Naive thymus-derived CD4-positive, alpha-beta T cell (primary cell): ENCODE measurements at regions of chr17 and their contacts with region 1.

Region 1: GRCh38 chr17:77287432-77288071 is 146.8 kb downstream of the SEC14L1 start:
- DNase-seq: no peak
- ATAC-seq: no peak
- H3K4me3 ChIP-seq: no peak overlapping the region
- H3K4me3 Mint-ChIP-seq: no peak overlapping the region
- H3K27ac ChIP-seq: no peak overlapping the region
- H3K27ac Mint-ChIP-seq: no peak overlapping the region
- H3K4me1 ChIP-seq: no peaks in the 10 kb centered on the region
- H3K4me1 Mint-ChIP-seq: peaks cover 0 to 10% (median 3%) of the 10 kb centered on the region in 7 donors
- H3K27me3 ChIP-seq: no peaks in the 10 kb centered on the region
- H3K27me3 Mint-ChIP-seq: peaks cover 0 to 13% (median 0%) of the 10 kb centered on the region in 5 donors

Region 2: DNA sequence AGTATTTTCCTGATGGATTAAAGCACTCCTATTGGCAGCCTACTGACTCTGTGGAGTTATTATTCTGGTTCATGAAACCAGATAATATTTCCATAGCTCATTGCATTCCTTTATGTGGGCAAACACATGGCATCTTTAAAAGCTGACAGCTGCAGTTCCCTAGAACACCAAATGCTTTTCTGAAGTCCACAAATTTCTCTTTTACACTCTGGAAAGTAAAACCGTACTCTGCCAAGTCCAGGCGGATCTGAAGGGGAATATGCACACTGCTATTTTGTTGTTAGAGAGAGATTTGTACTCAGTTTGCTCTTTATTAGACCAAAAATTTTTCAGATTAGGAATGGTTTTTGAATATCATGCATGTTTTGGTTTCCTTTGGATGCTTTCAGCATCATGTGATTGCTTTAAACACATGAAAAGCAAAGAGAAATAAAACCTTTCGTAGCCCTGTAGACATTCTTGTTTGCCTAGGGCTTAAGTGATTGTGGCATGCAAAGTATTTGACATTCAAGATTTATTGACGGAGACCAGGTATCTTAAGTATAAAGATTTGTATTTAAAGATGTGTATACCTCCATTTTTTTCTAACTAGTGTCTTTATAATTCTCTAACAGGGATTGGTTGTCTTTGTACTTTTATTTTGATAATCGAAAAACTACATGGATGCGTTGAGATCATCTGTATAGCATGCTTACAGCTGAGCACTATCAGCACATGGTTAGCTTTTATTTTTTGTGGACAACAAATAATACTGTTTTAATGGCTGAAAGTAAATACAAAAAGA is 127.3 kb before region 1 on chr17:
- CTCF ChIA-PET with region 1: no interaction called
- POLR2A ChIA-PET with region 1: interaction called, 10 read pairs
- intact Hi-C with region 1: no loop called
- DNase-seq: no peak
- ATAC-seq: no peak
- H3K4me3 ChIP-seq: no peak overlapping the region
- H3K4me3 Mint-ChIP-seq: no peak overlapping the region
- H3K27ac ChIP-seq: no peak overlapping the region
- H3K27ac Mint-ChIP-seq: peak overlapping the region in 4 of 9 donors; percentile 14 to 46 (median 30)
- H3K4me1 ChIP-seq: peaks cover 0 to 14% of the 10 kb centered on the region in 2 donors
- H3K4me1 Mint-ChIP-seq: peaks cover 44 to 73% (median 66%) of the 10 kb centered on the region in 7 donors
- H3K27me3 ChIP-seq: no peaks in the 10 kb centered on the region
- H3K27me3 Mint-ChIP-seq: no peaks in the 10 kb centered on the region

Region 3: GRCh38 chr17:77375917-77376651 is 88.5 kb after region 1 on chr17:
- CTCF ChIA-PET with region 1: no interaction called
- POLR2A ChIA-PET with region 1: no interaction called
- intact Hi-C with region 1: no loop called
- DNase-seq: peak; percentile 38 to 78 (median 75)
- ATAC-seq: peak; percentile 63
- H3K4me3 ChIP-seq: peak overlapping the region; percentile 98
- H3K4me3 Mint-ChIP-seq: peak overlapping the region; percentile 95 to 100 (median 99)
- H3K27ac ChIP-seq: peak overlapping the region; percentile 80
- H3K27ac Mint-ChIP-seq: peak overlapping the region; percentile 70 to 97 (median 96)
- H3K4me1 ChIP-seq: peaks cover 65 to 67% of the 10 kb centered on the region in 2 donors
- H3K4me1 Mint-ChIP-seq: peaks cover 57 to 79% (median 75%) of the 10 kb centered on the region in 7 donors
- H3K27me3 ChIP-seq: no peaks in the 10 kb centered on the region
- H3K27me3 Mint-ChIP-seq: no peaks in the 10 kb centered on the region